ENCODE measurements at regions of chr6 and their contacts with region 1.

Region 1: DNA sequence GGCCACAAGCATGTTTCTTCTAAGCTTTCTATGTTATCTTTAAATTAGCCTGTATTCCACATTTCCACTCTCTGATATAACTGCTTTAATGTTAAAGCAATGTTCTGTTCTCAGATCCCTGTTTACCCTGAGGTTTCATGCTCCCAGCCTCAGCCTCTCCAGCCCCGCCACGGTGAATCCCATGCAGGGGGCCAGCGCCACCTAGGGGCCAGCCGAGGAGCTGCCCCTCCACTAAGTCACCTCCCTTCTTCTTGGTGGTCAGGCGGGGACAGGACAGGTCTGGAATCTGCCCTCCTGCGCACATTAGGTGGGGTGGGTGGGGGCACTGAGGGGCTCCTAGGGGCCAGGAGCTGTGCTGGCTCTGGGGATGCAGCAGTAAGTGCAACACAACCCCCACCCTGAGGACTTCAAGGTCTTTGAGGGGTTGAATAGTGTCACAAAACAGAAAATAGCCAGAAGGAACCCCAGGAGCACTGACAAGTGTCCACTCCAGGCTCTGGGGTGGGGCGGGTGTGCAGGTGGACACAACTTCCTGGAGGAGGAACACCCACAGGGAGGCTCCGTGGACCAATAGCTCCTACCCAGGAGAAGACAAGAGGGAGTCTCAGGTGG is 61.6 kb downstream of the RAB44 start:
- DNase-seq: peak; percentile 89
- H3K4me3 Mint-ChIP-seq: no peak overlapping the region
- H3K27ac Mint-ChIP-seq: peak overlapping the region; percentile 11
- H3K4me1 Mint-ChIP-seq: peaks cover 40% of the 10 kb centered on the region
- H3K27me3 Mint-ChIP-seq: no peaks in the 10 kb centered on the region

Region 2: DNA sequence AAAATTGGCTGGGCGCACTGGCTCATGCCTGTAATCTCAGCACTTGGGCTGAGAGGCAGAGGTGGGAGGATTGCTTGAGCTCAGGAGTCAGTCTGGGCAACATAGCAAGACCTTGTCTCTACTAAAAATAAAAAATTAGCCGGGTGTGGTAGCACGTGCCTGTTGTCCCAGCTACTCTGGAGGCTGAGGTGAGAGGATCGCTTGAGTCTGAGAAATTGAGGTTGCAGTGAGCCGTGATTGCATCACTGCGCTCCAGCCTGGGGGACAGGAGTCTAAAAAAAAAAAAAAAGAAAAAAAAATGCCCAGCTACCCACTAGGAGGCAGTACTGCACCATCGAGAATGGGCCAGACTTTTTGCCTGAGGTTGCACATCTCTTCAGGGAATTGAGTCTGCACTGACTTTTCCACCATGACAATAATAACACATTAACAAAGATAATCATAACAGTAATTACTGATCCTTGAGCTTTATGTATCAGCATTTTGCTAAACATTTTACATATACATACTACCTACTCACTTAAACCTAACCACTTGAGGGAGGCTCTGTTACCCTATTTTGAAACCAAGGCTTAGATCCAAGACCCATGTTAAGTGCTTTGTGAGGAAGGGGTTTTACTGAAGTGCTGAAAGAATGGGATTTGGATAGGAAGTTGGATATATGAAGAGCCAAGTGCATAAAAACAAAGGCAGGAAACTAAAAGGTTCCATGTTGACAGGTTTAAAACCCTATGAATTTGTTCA is 144.1 kb before region 1 on chr6:
- CTCF ChIA-PET with region 1: interaction called, 96 read pairs
- POLR2A ChIA-PET with region 1: interaction called, 5 read pairs
- intact Hi-C with region 1: loop called (anchors 1 kb)
- DNase-seq: peak; percentile 70
- H3K4me3 Mint-ChIP-seq: no peak overlapping the region
- H3K27ac Mint-ChIP-seq: peak overlapping the region; percentile 66
- H3K4me1 Mint-ChIP-seq: peaks cover 18% of the 10 kb centered on the region
- H3K27me3 Mint-ChIP-seq: no peaks in the 10 kb centered on the region

Region 3: GRCh38 chr6:36691612-36692011 is 67.6 kb before region 1 on chr6:
- CTCF ChIA-PET with region 1: interaction called, 9 read pairs
- POLR2A ChIA-PET with region 1: interaction called, 8 read pairs
- intact Hi-C with region 1: loop called (anchors 1 kb)
- DNase-seq: peak; percentile 37
- H3K4me3 Mint-ChIP-seq: no peak overlapping the region
- H3K27ac Mint-ChIP-seq: peak overlapping the region; percentile 21
- H3K4me1 Mint-ChIP-seq: peaks cover 52% of the 10 kb centered on the region
- H3K27me3 Mint-ChIP-seq: no peaks in the 10 kb centered on the region

Region 4: GRCh38 chr6:36780442-36781177 is 21.4 kb after region 1 on chr6:
- CTCF ChIA-PET with region 1: interaction called, 345 read pairs
- POLR2A ChIA-PET with region 1: interaction called, 5 read pairs
- intact Hi-C with region 1: no loop called
- DNase-seq: no peak
- H3K4me3 Mint-ChIP-seq: no peak overlapping the region
- H3K27ac Mint-ChIP-seq: no peak overlapping the region
- H3K4me1 Mint-ChIP-seq: peaks cover 2% of the 10 kb centered on the region
- H3K27me3 Mint-ChIP-seq: no peaks in the 10 kb centered on the region

Region 5: GRCh38 chr6:36912586-36912985 is 153.3 kb after region 1 on chr6:
- CTCF ChIA-PET with region 1: interaction called, 4 read pairs
- POLR2A ChIA-PET with region 1: no interaction called
- intact Hi-C with region 1: loop called (anchors 5 kb)
- DNase-seq: peak; percentile 81
- H3K4me3 Mint-ChIP-seq: peak overlapping the region; percentile 27
- H3K27ac Mint-ChIP-seq: peak overlapping the region; percentile 70
- H3K4me1 Mint-ChIP-seq: peaks cover 51% of the 10 kb centered on the region
- H3K27me3 Mint-ChIP-seq: no peaks in the 10 kb centered on the region